ENCODE measurements at regions of chr4 and their contacts with region 1.

Region 1: DNA sequence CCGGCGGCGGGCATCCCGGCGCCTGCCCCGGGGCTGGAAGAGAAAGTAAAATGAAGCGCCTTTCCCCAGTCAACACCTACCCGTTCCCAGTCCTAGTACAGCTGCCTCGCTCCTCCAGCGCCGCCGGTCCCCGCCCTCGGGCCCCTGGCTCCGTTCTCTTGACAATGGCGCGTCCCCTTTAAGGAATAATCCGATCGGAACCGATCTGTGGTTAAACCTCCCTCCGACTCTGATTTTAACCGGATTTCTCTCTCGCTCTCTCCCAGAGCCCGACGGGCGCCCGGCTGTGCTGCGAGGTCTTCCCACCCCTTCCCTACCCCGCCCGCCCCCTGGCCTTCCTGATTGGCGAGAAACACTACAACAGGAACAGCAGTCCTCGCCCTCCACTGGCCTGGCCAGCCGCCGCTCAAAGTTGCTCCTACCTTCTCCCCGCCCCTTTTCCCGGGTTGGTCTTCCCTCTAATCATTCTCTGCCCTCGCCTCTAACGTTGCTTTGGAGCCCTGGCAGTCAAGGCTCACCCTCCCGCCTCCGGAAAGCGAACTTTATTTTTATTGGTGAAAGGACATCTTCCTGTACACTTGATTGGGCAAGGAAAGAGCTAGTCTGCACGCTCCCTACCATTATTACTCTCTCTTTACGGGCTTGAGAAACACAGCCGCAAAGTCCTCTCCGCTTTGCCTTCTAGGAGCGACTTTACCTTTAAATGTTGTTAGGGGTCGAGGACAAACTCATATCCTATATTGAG is at the start of gene FRYL:
- DNase-seq: peak; percentile 88 to 99
- ATAC-seq: peak; percentile 84 to 93 (median 87)
- H3K4me3 ChIP-seq: peak within 1 kb of the TSS; percentile 99
- H3K4me3 Mint-ChIP-seq: peak within 1 kb of the TSS; percentile 97
- H3K27ac ChIP-seq: peak within 1 kb of the TSS; percentile 87
- H3K27ac Mint-ChIP-seq: peak within 1 kb of the TSS; percentile 83 to 85
- H3K4me1 ChIP-seq: peaks cover 10% of the 10 kb centered on the region
- H3K4me1 Mint-ChIP-seq: peaks cover 44 to 56% of the 10 kb centered on the region in 2 donors
- H3K27me3 ChIP-seq: no peaks in the 10 kb centered on the region
- H3K27me3 Mint-ChIP-seq: no peaks in the 10 kb centered on the region
- CTCF ChIP-seq: no peak
- total RNA-seq, gene FRYL: 143 to 181 (median 146) TPM

Region 2: GRCh38 chr4:48698029-48698971 is 81.9 kb before region 1 on chr4:
- intact Hi-C with region 1: loop called (anchors 1 kb)
- DNase-seq: peak in 1 of 2 donors; percentile 17
- ATAC-seq: peak in 1 of 3 donors; percentile 56
- H3K4me3 ChIP-seq: no peak overlapping the region
- H3K4me3 Mint-ChIP-seq: peak overlapping the region; percentile 11
- H3K27ac ChIP-seq: no peak overlapping the region
- H3K27ac Mint-ChIP-seq: peak overlapping the region; percentile 74 to 82
- H3K4me1 ChIP-seq: peaks cover 3% of the 10 kb centered on the region
- H3K4me1 Mint-ChIP-seq: peaks cover 62 to 75% of the 10 kb centered on the region in 2 donors
- H3K27me3 ChIP-seq: no peaks in the 10 kb centered on the region
- H3K27me3 Mint-ChIP-seq: no peaks in the 10 kb centered on the region
- CTCF ChIP-seq: no peak

Region 3: DNA sequence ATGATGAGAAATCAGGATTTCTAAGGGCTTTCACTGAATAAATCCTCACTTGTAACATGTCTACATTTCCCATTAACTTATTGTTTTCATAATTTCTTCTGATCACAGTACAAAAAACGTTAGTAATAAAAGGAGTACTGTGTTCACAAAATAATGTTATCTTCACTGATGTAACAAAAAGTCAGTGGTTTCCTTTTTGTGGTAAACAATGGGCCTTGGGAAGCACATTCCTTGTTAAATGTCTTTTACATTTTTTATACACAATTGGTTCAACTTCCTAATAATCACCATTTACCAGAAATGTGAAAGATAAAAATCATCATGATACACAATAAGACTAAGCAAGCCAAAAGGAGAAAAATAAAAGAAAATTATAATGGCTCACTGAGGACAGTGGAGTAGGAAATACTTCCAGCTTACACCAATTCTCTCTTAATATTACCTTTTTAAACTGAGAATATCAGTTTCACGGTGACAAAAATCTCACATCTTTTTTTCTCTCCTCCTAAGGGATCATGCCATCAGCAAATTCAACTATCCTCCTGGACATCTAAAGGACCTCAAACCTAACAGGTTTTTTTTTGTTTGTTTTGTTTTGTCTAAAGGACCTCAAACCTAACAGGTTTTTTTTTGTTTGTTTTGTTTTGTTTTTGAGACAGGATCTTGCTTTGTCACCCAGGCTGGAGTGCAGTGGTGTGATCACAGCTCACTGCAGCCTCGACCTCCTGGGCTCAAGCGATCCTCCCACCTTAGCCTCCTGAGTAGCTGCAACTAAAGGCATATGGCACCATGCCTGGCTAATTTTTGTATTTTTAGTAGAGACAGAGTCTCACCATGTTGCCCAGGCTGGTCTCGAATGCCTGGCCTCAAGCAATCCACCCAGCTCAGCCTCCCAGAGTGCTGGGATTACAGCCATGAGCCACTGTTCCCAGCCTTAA is 57.4 kb before region 1 on chr4:
- intact Hi-C with region 1: loop called (anchors 10 kb)
- DNase-seq: no peak
- ATAC-seq: peak; percentile 32 to 57 (median 53)
- H3K4me3 ChIP-seq: no peak overlapping the region
- H3K4me3 Mint-ChIP-seq: no peak overlapping the region
- H3K27ac ChIP-seq: no peak overlapping the region
- H3K27ac Mint-ChIP-seq: peak overlapping the region; percentile 8 to 35
- H3K4me1 ChIP-seq: peaks cover 12% of the 10 kb centered on the region
- H3K4me1 Mint-ChIP-seq: peaks cover 72 to 77% of the 10 kb centered on the region in 2 donors
- H3K27me3 ChIP-seq: no peaks in the 10 kb centered on the region
- H3K27me3 Mint-ChIP-seq: no peaks in the 10 kb centered on the region
- CTCF ChIP-seq: no peak

Region 4: GRCh38 chr4:48739560-48740019 is 40.6 kb before region 1 on chr4:
- intact Hi-C with region 1: loop called (anchors 5 kb)
- DNase-seq: no peak
- ATAC-seq: peak; percentile 46 to 56 (median 49)
- H3K4me3 ChIP-seq: no peak overlapping the region
- H3K4me3 Mint-ChIP-seq: peak overlapping the region; percentile 53
- H3K27ac ChIP-seq: peak overlapping the region; percentile 33
- H3K27ac Mint-ChIP-seq: peak overlapping the region; percentile 56 to 69
- H3K4me1 ChIP-seq: peaks cover 25% of the 10 kb centered on the region
- H3K4me1 Mint-ChIP-seq: peaks cover 75 to 81% of the 10 kb centered on the region in 2 donors
- H3K27me3 ChIP-seq: no peaks in the 10 kb centered on the region
- H3K27me3 Mint-ChIP-seq: no peaks in the 10 kb centered on the region
- CTCF ChIP-seq: no peak